ENCODE measurements at regions of chr2 and their contacts with region 1.

Region 1: GRCh38 chr2:50401772-50402653 is 629.9 kb downstream of the NRXN1 start:
- DNase-seq: peak; percentile 56
- ATAC-seq: peak; percentile 64
- H3K4me3 ChIP-seq: no peak overlapping the region
- H3K27ac ChIP-seq: no peak overlapping the region
- H3K4me1 ChIP-seq: no peaks in the 10 kb centered on the region
- H3K27me3 ChIP-seq: peaks cover 8% of the 10 kb centered on the region; the same call in 1 of the 2 replicates
- CTCF ChIP-seq: peak; percentile 54 to 98 (median 90); a peak in 5 of 6 replicates
- POLR2A ChIP-seq: no peak
- RAD21 ChIP-seq: peak; percentile 81

Region 2: DNA sequence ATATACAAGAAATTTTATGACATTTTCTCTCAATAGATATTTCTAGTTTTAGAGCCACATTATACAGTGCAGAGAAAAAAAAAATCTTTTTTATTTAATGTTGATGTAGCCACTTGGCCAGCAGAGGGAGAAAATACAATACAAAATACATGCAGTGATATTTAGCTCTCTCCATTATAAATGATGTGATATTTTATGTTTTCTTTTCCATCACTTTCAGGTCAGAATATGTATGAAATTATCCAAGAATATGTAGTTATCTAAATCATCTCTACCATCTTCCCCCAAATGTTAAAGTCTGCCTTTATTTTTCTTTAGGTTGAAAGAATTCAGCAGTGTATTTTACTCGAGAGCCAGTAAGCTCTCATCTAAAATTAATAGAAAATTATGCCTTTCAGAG is 714.1 kb before region 1 on chr2:
- CTCF ChIA-PET with region 1: interaction called, 4 read pairs
- POLR2A ChIA-PET with region 1: no interaction called
- RAD21 ChIA-PET with region 1: no interaction called
- intact Hi-C with region 1: loop called (anchors 5 kb)
- DNase-seq: no peak
- ATAC-seq: no peak
- H3K4me3 ChIP-seq: no peak overlapping the region
- H3K27ac ChIP-seq: no peak overlapping the region
- H3K4me1 ChIP-seq: no peaks in the 10 kb centered on the region
- H3K27me3 ChIP-seq: no peaks in the 10 kb centered on the region
- CTCF ChIP-seq: no peak; a peak in 1 of 6 replicates
- POLR2A ChIP-seq: no peak
- RAD21 ChIP-seq: no peak

Measured in HCT116 (cell line).